ENCODE measurements at regions of chr17 and their contacts with region 1.

Region 1: GRCh38 chr17:5584383-5585286 is at the start of gene NLRP1:
- DNase-seq: peak in 8 of 10 donors; percentile 35 to 64 (median 55)
- H3K4me3 ChIP-seq: peak within 1 kb of the TSS in 54 of 59 donors; percentile 0 to 59 (median 38)
- H3K27ac ChIP-seq: peak within 1 kb of the TSS in 27 of 59 donors; percentile 14 to 82 (median 53)
- H3K27me3 ChIP-seq: no peaks in the 10 kb centered on the region
- CTCF ChIP-seq: no peak
- total RNA-seq, gene NLRP1: 96.8 to 322 (median 204) TPM

Region 2: DNA sequence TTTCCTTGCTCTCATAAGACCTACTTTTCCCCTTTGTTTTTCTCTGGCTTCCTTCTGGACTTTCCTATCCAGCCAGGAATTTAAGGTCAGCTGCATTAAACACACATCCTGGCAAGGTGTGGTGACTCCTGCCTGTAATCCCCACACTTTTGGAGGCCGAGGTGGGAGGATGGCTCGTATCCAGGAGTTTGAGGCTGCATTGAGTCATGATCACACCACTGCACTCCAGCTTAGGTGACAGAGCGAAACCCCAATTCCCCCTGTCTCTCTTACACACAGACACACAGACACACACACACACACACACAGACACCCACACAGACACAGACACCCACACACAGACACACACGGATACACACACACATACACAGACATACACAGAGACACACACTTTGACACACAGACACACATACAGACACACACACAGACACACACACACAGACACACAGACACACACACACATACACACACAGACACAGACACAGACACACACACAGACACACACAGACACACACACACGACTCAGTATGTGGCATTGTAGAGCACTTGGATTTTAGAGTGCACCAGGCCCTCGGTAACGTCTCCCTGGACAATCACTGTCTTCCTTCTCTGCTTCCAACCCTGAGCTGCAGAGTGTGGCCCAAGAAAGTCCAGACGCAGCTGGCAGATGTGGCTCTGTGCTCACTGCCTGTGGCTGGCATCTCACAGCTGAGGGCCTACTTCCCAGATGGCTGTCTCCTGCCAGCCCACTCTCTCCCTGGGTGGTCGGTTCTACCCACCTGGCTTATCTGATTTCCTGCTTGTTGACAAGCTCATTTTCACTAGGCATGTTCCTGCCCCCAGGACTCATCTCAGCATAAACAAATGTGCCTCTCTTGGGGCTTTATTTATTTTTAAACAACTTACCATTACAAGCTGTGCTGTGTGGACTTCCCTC is 39.3 kb before region 1 on chr17:
- intact Hi-C with region 1: no loop called
- DNase-seq: peak in 1 of 10 donors; percentile 31
- H3K4me3 ChIP-seq: no peak overlapping the region
- H3K27ac ChIP-seq: no peak overlapping the region
- H3K27me3 ChIP-seq: no peaks in the 10 kb centered on the region
- CTCF ChIP-seq: no peak

Region 3: GRCh38 chr17:6061290-6061689 is 476.7 kb after region 1 on chr17:
- intact Hi-C with region 1: loop called in 1 of 2 experiments (anchors 5 kb)
- DNase-seq: no peak
- H3K4me3 ChIP-seq: no peak overlapping the region
- H3K27ac ChIP-seq: no peak overlapping the region
- H3K27me3 ChIP-seq: peaks cover 0 to 32% (median 0%) of the 10 kb centered on the region in 45 donors
- CTCF ChIP-seq: no peak

Measured in dorsolateral prefrontal cortex (tissue), 120 donors.